Transverse colon (tissue), 4 donors: ENCODE measurements at regions of chr10 and their contacts with region 1.

Region 1: GRCh38 chr10:128095027-128095752 is 31.0 kb downstream of the MKI67 start:
- DNase-seq: peak; percentile 33
- H3K4me3 ChIP-seq: no peak overlapping the region
- H3K27ac ChIP-seq: no peak overlapping the region
- H3K4me1 ChIP-seq: no peaks in the 10 kb centered on the region
- H3K27me3 ChIP-seq: no peaks in the 10 kb centered on the region
- CTCF ChIP-seq: no peak
- EP300 ChIP-seq: no peak
- POLR2A ChIP-seq: no peak

Region 2: DNA sequence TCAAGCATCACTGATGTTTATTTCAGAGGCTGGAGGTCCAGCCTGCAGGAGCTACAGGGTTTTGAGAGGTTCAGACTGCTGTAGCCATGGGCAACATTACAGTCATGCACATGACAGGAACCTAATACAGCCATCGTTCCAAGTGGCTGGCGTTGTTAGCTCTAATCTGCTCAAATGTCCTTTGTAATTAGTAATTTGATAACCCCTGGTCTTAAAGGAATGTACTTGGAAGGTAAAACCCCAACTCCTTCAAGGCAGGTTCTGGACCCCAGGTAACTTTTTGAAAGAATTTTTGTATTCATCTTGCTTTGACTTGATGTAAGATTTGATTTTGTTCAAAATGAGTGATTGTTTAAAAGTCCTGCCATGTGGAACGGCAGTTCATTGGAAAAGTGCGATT is 392.9 kb before region 1 on chr10:
- in situ Hi-C with region 1: no loop called
- intact Hi-C with region 1: no loop called
- DNase-seq: no peak
- H3K4me3 ChIP-seq: no peak overlapping the region
- H3K27ac ChIP-seq: no peak overlapping the region
- H3K4me1 ChIP-seq: no peaks in the 10 kb centered on the region
- H3K27me3 ChIP-seq: peaks cover 12% of the 10 kb centered on the region
- CTCF ChIP-seq: no peak
- EP300 ChIP-seq: no peak
- POLR2A ChIP-seq: no peak

Region 3: DNA sequence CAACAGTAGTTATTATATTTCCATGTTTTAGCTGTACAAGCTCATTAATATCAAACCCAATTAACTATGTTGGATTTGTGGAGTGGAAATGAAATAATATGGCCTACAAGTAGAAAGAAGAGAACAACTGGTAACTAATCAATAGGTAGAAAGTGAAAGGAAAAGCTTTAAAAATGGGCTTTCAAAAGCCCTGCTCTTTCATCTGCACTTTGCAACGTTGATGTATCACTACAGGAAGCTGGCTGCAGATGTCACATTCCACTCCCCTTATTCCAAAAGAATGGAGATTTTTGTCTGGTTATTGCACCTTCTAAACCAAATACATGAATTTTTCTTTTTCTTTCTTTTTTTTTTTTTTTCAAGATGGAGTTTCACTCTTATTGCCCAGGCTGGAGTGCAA is 42.7 kb after region 1 on chr10:
- in situ Hi-C with region 1: loop called in 1 of 4 experiments (anchors 5 kb)
- intact Hi-C with region 1: no loop called
- DNase-seq: no peak
- H3K4me3 ChIP-seq: no peak overlapping the region
- H3K27ac ChIP-seq: no peak overlapping the region
- H3K4me1 ChIP-seq: no peaks in the 10 kb centered on the region
- H3K27me3 ChIP-seq: no peaks in the 10 kb centered on the region
- CTCF ChIP-seq: no peak
- EP300 ChIP-seq: no peak
- POLR2A ChIP-seq: no peak